Testis (tissue), 5 donors: ENCODE measurements at regions of chr11 and their contacts with region 1.

Region 1: DNA sequence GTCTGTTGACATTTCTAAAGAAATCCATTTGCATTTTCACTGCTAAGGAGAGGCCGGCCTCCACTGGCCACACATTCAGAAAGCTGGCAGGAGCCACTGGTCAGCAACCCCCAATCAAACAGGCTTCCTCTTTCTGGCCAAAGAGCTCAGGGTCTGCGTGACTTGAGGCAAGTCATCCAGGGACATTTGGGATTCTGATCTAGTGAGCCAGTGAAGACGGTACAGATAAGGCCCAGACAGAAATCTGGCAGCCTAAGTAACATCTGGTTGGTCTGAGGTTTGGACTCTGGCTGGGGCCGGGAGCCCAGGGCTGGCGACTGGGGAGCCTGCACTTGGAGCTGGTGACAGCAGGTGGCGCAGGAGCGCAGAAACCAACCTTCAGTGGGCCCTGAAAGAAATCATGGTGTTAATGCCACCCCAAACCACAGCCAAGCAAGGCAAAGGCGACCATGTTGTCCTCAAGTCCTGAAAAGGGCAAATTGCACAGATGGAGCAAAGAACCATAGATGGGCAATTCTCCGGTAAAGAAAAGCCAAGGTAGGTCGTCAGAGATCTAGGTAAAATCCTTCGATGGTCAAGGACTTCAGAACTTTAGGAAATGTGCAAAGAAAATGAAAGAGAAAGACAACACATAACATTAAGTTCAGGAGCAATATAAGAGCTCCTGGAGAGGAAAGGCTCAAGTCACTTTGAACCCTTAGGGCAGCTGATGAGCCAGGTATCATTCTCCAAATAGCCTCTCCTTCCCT is 99.4 kb upstream of the BLID start:
- DNase-seq: peak; percentile 73
- H3K4me3 ChIP-seq: no peak overlapping the region
- H3K27ac ChIP-seq: peak overlapping the region in 1 of 2 donors; percentile 22
- H3K4me1 ChIP-seq: peaks cover under 1% of the 10 kb centered on the region
- H3K27me3 ChIP-seq: no peaks in the 10 kb centered on the region
- CTCF ChIP-seq: peak; percentile 73 to 84 (median 74)
- POLR2A ChIP-seq: no peak

Region 2: GRCh38 chr11:122159173-122159721 is 56.2 kb before region 1 on chr11:
- intact Hi-C with region 1: no loop called
- DNase-seq: peak; percentile 48
- H3K4me3 ChIP-seq: no peak overlapping the region
- H3K27ac ChIP-seq: peak overlapping the region; percentile 85 to 91
- H3K4me1 ChIP-seq: peaks cover 30% of the 10 kb centered on the region
- H3K27me3 ChIP-seq: no peaks in the 10 kb centered on the region
- CTCF ChIP-seq: no peak
- POLR2A ChIP-seq: no peak

Region 3: DNA sequence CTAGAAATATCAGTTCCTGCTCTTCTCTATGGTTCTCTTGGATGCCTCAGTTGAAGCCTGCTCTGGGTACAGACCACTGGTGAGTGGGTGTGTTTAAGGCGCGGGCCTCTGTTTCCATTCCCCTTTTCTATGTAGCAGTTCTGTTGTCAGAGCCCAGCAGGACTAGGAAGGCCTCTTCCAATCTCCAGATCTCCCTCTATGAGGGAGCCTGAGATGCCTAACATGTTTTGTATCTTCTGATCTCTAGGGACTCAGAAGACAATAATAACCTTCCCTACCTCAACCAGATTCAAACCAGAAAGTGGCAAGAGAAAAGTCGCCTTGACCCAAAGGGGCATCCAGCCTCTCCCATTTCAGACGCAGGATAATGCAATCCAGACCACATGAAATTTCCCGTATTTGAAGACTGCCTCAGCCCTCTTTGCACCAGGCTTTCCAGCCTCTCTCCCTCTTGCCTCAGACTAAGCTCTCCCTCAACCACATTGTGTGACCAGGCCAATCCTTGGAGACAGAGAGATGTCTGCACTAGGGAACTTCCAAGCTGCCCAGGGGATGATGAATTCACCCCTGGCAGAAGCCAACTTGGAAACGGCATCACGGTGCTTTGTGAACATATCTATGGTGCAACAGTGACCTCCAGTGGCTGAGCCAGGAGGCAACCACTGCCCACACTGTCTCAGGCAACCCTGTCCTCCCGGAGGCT is 290.0 kb after region 1 on chr11:
- intact Hi-C with region 1: loop called (anchors 10 kb)
- DNase-seq: peak; percentile 92
- H3K4me3 ChIP-seq: no peak overlapping the region
- H3K27ac ChIP-seq: no peak overlapping the region
- H3K4me1 ChIP-seq: peaks cover 7% of the 10 kb centered on the region
- H3K27me3 ChIP-seq: no peaks in the 10 kb centered on the region
- CTCF ChIP-seq: peak; percentile 64 to 82 (median 72)
- POLR2A ChIP-seq: no peak